ENCODE measurements at regions of chr6 and their contacts with region 1.

Region 1: GRCh38 chr6:159212028-159212427 is 42.8 kb downstream of the FNDC1 start:
- DNase-seq: no peak
- H3K4me3 ChIP-seq: no peak overlapping the region
- H3K27ac ChIP-seq: no peak overlapping the region
- H3K4me1 ChIP-seq: no peaks in the 10 kb centered on the region
- H3K27me3 ChIP-seq: no peaks in the 10 kb centered on the region
- CTCF ChIP-seq: no peak
- POLR2A ChIP-seq: no peak

Region 2: GRCh38 chr6:159184559-159184958 is 27.5 kb before region 1 on chr6:
- CTCF ChIA-PET with region 1: no interaction called
- POLR2A ChIA-PET with region 1: no interaction called
- dilution Hi-C with region 1: no loop called
- intact Hi-C with region 1: no loop called
- DNase-seq: no peak
- H3K4me3 ChIP-seq: no peak overlapping the region
- H3K27ac ChIP-seq: no peak overlapping the region
- H3K4me1 ChIP-seq: no peaks in the 10 kb centered on the region
- H3K27me3 ChIP-seq: no peaks in the 10 kb centered on the region
- CTCF ChIP-seq: no peak
- POLR2A ChIP-seq: no peak

Region 3: DNA sequence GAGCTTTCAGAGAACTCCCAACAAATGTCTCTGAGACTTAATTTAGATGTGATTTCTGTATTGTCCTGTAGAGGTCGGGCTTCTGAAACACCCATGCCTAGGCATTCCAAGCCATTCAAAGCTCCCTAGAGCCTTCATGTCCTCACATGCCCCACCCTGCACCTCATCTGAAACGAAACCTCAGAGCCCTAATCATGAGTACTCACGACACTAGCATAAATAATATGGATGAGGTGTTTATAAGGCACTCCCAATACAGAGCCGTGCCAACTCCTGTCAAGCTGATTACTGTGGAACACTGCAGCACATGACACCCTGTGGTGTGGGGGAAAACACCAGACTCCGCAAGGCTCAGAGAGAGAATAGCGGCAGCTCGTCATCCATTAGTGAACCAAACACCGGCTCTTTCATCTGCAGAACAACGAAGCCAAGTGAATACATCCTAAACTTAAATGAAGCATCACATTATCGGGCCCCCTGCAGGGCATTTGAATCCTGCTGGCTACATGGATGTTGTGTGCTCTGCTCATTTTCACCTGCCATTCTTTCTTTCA is 41.0 kb after region 1 on chr6:
- CTCF ChIA-PET with region 1: no interaction called
- POLR2A ChIA-PET with region 1: no interaction called
- dilution Hi-C with region 1: no loop called
- intact Hi-C with region 1: no loop called
- DNase-seq: no peak
- H3K4me3 ChIP-seq: no peak overlapping the region
- H3K27ac ChIP-seq: no peak overlapping the region
- H3K4me1 ChIP-seq: no peaks in the 10 kb centered on the region
- H3K27me3 ChIP-seq: no peaks in the 10 kb centered on the region
- CTCF ChIP-seq: no peak
- POLR2A ChIP-seq: no peak

Region 4: DNA sequence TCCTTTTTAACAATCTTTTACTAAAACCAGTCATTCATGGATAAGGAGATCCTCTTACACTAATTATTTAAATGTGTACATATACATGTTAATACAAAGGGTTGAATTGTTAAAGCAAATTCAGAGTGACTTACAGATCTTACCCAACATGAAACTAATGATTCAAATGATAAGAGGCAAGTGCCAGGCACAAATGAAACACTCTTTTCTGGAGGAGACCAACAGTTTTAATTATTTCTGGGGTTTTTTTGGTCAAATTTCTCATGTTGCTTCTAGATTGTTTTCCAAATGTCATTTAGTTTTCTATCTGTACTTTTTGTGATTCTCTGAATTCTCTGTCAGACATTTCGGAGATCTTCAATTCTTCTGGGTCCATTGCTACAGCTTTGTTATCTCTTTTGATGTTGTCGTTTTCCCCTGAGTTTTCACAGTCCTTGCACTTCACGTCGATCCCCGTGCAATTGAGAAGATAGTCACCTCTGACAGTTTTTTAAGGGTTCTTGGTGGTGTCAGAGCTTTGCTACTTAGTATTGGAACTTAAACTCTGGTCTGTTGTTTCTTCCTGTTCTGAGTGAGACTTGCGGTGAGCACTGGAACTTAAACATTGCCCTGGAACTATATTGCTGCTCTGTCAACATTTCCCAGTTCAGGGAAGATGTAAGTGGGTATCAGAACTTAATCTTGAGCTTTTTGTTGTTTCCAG is 702.0 kb after region 1 on chr6:
- CTCF ChIA-PET with region 1: no interaction called
- POLR2A ChIA-PET with region 1: no interaction called
- dilution Hi-C with region 1: no loop called
- intact Hi-C with region 1: loop called (anchors 5 kb)
- DNase-seq: no peak
- H3K4me3 ChIP-seq: no peak overlapping the region
- H3K27ac ChIP-seq: no peak overlapping the region
- H3K4me1 ChIP-seq: no peaks in the 10 kb centered on the region
- H3K27me3 ChIP-seq: no peaks in the 10 kb centered on the region
- CTCF ChIP-seq: no peak
- POLR2A ChIP-seq: no peak

Measured in endothelial cell of umbilical vein (primary cell).